ENCODE measurements at regions of chr10 and their contacts with region 1.

Region 1: GRCh38 chr10:118459726-118460193 is 117.6 kb upstream of the FAM204A start:
- DNase-seq: peak; percentile 24 to 44 (median 33)
- H3K4me3 ChIP-seq: peak overlapping the region in 1 of 2 donors; percentile 23
- H3K4me3 Mint-ChIP-seq: peak overlapping the region in 7 of 8 donors; percentile 46 to 78 (median 74)
- H3K27ac ChIP-seq: no peak overlapping the region
- H3K27ac Mint-ChIP-seq: peak overlapping the region in 2 of 7 donors; percentile 14 to 53
- H3K4me1 ChIP-seq: no peaks in the 10 kb centered on the region
- H3K4me1 Mint-ChIP-seq: peaks cover 0 to 4% (median 3%) of the 10 kb centered on the region in 4 donors
- H3K27me3 ChIP-seq: no peaks in the 10 kb centered on the region
- H3K27me3 Mint-ChIP-seq: peaks cover 29 to 40% of the 10 kb centered on the region in 2 donors

Region 2: DNA sequence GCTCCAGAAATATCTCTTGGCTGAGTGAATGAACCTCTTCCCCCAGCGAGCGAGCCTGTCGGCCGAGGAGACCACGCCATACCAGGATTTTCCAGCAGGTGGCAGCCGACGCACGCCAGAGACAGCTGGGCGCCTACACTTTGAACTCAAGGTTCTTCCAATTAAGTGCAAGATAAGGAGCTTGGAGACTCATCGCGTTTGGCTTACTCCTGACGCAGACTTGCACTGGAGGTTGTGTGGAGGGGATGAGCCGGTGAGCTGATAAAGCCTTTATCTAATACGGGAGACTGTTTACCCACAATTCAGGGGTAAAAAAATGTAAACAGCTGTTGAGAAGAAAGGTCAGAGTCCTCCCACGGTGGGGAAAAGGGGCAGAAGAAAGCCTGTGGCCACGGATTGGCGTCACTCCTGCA is 963.1 kb before region 1 on chr10:
- CTCF ChIA-PET with region 1: interaction called, 38 read pairs
- POLR2A ChIA-PET with region 1: no interaction called
- intact Hi-C with region 1: no loop called
- DNase-seq: peak; percentile 38 to 63 (median 55)
- H3K4me3 ChIP-seq: no peak overlapping the region
- H3K4me3 Mint-ChIP-seq: peak overlapping the region in 1 of 8 donors; percentile 32
- H3K27ac ChIP-seq: no peak overlapping the region
- H3K27ac Mint-ChIP-seq: no peak overlapping the region
- H3K4me1 ChIP-seq: no peaks in the 10 kb centered on the region
- H3K4me1 Mint-ChIP-seq: peaks cover 0 to 4% (median 2%) of the 10 kb centered on the region in 4 donors
- H3K27me3 ChIP-seq: peaks cover 8% of the 10 kb centered on the region
- H3K27me3 Mint-ChIP-seq: peaks cover 13 to 16% of the 10 kb centered on the region in 2 donors

Region 3: GRCh38 chr10:118341791-118342637 is 117.7 kb before region 1 on chr10 and contains the start of gene FAM204A:
- CTCF ChIA-PET with region 1: interaction called, 3 read pairs
- POLR2A ChIA-PET with region 1: no interaction called
- intact Hi-C with region 1: loop called (anchors 1 kb)
- DNase-seq: peak; percentile 96 to 99 (median 97)
- H3K4me3 ChIP-seq: peak within 1 kb of the TSS; percentile 88 to 96
- H3K4me3 Mint-ChIP-seq: peak within 1 kb of the TSS; percentile 93 to 100 (median 95)
- H3K27ac ChIP-seq: peak within 1 kb of the TSS; percentile 78
- H3K27ac Mint-ChIP-seq: peak within 1 kb of the TSS; percentile 93 to 99 (median 97)
- H3K4me1 ChIP-seq: peaks cover 46% of the 10 kb centered on the region
- H3K4me1 Mint-ChIP-seq: peaks cover 35 to 64% (median 49%) of the 10 kb centered on the region in 4 donors
- H3K27me3 ChIP-seq: no peaks in the 10 kb centered on the region
- H3K27me3 Mint-ChIP-seq: peaks cover 0 to 2% of the 10 kb centered on the region in 2 donors
- total RNA-seq, gene FAM204A: 64.3 to 65.9 TPM

Region 4: DNA sequence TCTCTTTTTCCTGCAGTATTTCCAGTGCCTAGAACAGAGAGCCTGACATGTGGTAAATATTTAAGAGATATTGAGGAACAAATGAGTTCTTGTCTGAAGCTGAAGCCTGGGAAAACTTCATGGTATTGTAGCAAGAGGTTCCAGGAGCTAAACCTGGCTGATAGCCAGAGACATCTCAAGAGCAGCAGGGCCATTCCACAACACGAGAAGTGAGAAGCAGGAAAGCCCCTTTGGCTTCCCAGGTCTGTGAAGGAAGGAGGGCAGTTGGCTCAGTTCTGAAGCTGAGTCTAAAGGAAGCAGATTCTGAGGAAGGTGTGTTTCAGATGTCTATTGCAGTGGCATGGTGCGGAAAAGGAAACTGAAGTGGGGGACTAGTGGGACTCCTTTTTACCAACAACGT is 53.8 kb before region 1 on chr10:
- CTCF ChIA-PET with region 1: no interaction called
- POLR2A ChIA-PET with region 1: no interaction called
- intact Hi-C with region 1: no loop called
- DNase-seq: no peak
- H3K4me3 ChIP-seq: no peak overlapping the region
- H3K4me3 Mint-ChIP-seq: no peak overlapping the region
- H3K27ac ChIP-seq: no peak overlapping the region
- H3K27ac Mint-ChIP-seq: no peak overlapping the region
- H3K4me1 ChIP-seq: no peaks in the 10 kb centered on the region
- H3K4me1 Mint-ChIP-seq: no peaks in the 10 kb centered on the region
- H3K27me3 ChIP-seq: no peaks in the 10 kb centered on the region
- H3K27me3 Mint-ChIP-seq: peaks cover 15 to 16% of the 10 kb centered on the region in 2 donors

Region 5: DNA sequence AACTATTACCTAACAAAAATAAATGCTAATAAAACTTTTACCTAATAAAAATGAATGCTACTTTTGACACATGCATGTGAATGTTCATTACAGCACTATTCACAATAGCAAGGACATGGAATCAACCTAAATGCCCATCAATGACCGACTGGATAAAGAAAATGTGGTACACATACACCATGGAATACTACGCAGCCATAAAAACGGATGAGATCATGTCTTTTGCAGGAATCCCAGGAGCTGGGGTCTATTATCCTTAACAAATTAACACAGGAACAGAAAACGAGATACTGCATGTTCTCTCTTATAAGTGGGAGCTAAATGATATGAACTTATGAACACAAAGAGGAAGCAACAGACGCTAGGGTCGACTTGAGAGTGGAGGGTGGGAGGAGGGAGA is 29.6 kb before region 1 on chr10:
- CTCF ChIA-PET with region 1: interaction called, 10 read pairs
- POLR2A ChIA-PET with region 1: no interaction called
- intact Hi-C with region 1: no loop called
- DNase-seq: no peak
- H3K4me3 ChIP-seq: no peak overlapping the region
- H3K4me3 Mint-ChIP-seq: no peak overlapping the region
- H3K27ac ChIP-seq: no peak overlapping the region
- H3K27ac Mint-ChIP-seq: no peak overlapping the region
- H3K4me1 ChIP-seq: no peaks in the 10 kb centered on the region
- H3K4me1 Mint-ChIP-seq: no peaks in the 10 kb centered on the region
- H3K27me3 ChIP-seq: no peaks in the 10 kb centered on the region
- H3K27me3 Mint-ChIP-seq: peaks cover 11 to 13% of the 10 kb centered on the region in 2 donors

Region 6: DNA sequence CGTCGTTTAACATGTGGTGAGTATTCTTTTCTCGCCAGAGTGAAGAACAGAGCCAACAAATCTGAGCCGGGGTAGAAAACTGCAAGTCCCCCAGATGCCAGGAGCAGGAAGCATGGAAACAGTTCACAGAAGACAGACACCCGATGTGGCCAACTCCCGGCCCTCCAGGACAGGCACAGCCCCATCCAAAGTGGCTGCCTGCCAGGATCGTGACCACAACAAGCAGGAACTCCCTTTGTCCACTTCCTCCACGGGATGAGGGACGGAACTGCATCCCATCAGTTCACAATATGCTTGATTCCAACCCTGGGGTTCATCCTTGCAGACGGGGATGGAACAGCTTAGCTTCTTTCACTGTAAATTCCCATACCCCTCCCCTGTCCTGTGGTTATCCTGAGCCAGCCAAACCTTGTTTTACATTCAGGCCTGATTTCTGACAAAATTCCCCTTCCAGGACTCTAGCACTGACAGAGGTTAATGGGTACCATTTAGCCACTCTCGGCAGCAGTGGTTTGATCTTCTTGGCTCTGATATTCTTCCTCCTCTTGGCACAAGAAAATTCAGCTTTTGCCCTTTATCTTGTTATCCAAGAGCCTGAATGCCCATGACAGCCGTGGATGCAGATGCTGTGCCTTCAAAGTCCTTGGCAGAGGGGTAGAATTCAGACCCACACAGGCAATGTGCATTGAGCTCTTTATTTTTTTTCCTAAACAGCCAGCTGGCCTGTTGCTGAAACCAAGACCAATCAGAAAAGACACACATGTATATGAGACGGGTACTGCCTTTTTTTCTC is 12.1 kb before region 1 on chr10:
- CTCF ChIA-PET with region 1: interaction called, 27 read pairs
- POLR2A ChIA-PET with region 1: no interaction called
- intact Hi-C with region 1: no loop called
- DNase-seq: no peak
- H3K4me3 ChIP-seq: no peak overlapping the region
- H3K4me3 Mint-ChIP-seq: no peak overlapping the region
- H3K27ac ChIP-seq: no peak overlapping the region
- H3K27ac Mint-ChIP-seq: no peak overlapping the region
- H3K4me1 ChIP-seq: no peaks in the 10 kb centered on the region
- H3K4me1 Mint-ChIP-seq: no peaks in the 10 kb centered on the region
- H3K27me3 ChIP-seq: no peaks in the 10 kb centered on the region
- H3K27me3 Mint-ChIP-seq: peaks cover 28% of the 10 kb centered on the region in 2 donors

Region 7: GRCh38 chr10:118471863-118472262 is 12.1 kb after region 1 on chr10:
- CTCF ChIA-PET with region 1: interaction called, 16 read pairs
- POLR2A ChIA-PET with region 1: no interaction called
- intact Hi-C with region 1: no loop called
- DNase-seq: no peak
- H3K4me3 ChIP-seq: no peak overlapping the region
- H3K4me3 Mint-ChIP-seq: no peak overlapping the region
- H3K27ac ChIP-seq: no peak overlapping the region
- H3K27ac Mint-ChIP-seq: no peak overlapping the region
- H3K4me1 ChIP-seq: no peaks in the 10 kb centered on the region
- H3K4me1 Mint-ChIP-seq: no peaks in the 10 kb centered on the region
- H3K27me3 ChIP-seq: no peaks in the 10 kb centered on the region
- H3K27me3 Mint-ChIP-seq: peaks cover 14 to 42% of the 10 kb centered on the region in 2 donors

Region 8: DNA sequence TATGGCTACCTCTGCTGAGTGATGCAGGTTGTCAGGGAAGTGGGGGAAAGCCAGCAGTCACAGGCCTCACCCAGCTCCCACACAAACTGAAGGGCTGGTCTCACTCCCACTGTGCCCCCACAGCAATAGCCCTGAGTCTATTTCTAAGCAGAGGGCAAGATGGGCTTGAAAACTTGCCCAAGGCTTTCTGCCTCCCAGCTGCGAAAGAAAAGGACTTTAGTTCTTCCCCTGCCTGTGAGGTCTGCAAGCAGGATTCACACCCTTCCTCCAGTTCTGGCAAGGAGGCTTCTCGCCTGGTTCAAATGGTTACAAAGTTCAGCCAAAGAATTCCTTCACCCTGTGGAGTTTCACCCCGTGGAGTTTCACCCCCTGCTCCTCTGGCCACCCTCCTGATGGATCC is 199.0 kb after region 1 on chr10:
- CTCF ChIA-PET with region 1: no interaction called
- POLR2A ChIA-PET with region 1: no interaction called
- intact Hi-C with region 1: no loop called
- DNase-seq: no peak
- H3K4me3 ChIP-seq: peak overlapping the region in 1 of 2 donors; percentile 28
- H3K4me3 Mint-ChIP-seq: peak overlapping the region in 7 of 8 donors; percentile 48 to 80 (median 59)
- H3K27ac ChIP-seq: peak overlapping the region; percentile 26
- H3K27ac Mint-ChIP-seq: peak overlapping the region; percentile 19 to 85 (median 71)
- H3K4me1 ChIP-seq: peaks cover 60% of the 10 kb centered on the region
- H3K4me1 Mint-ChIP-seq: peaks cover 54 to 81% (median 73%) of the 10 kb centered on the region in 4 donors
- H3K27me3 ChIP-seq: no peaks in the 10 kb centered on the region
- H3K27me3 Mint-ChIP-seq: peaks cover 2% of the 10 kb centered on the region in 2 donors